ENCODE measurements at regions of chr19 and their contacts with region 1.

Region 1: DNA sequence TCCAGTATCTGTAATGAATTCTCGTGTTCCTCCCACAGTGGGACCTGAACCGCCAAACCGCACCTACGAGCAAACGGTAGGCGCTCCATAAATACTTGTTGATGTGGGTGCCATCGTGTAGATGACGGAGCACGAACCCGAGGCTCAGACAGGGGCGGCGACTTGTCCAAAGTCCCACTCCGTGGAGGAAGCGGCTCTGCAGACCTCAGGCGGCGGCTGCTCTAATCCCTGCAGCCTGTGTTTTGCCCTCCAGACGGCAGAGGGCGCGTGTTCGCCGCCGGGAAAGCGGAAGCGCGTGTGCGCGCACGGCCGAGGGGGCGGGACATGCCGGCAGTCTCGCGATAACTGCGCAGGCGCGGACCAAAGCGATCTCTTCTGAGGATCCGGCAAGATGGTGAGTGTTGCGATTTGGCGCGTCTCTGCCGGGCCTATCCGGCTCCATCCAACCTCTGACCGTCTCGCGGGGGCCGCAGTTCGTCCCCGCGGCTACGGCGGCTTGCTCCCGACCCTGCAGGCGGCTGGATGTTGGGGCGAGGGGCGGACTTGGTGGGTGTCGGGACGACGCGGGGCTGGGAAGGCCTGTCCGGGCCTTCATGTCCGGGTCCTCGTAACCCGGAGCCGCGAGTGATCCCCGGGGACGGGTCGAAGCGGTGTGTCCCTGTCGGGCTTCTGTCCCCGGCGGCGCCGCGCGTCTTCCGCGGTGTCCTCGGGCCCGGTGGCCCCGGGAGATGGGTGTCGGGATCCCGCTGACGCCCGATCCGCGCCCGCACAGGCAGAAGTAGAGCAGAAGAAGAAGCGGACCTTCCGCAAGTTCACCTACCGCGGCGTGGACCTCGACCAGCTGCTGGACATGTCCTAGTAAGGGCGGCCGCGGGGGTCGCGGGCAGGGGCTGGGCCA is at the start of gene RPS15:
- DNase-seq: peak; percentile 91 to 99 (median 94)

Region 2: GRCh38 chr19:1275260-1275975 is 162.9 kb before region 1 on chr19 and contains the start of gene FAM174C:
- intact Hi-C with region 1: loop called (anchors 10 kb)
- DNase-seq: peak; percentile 89 to 99 (median 96)

Region 3: DNA sequence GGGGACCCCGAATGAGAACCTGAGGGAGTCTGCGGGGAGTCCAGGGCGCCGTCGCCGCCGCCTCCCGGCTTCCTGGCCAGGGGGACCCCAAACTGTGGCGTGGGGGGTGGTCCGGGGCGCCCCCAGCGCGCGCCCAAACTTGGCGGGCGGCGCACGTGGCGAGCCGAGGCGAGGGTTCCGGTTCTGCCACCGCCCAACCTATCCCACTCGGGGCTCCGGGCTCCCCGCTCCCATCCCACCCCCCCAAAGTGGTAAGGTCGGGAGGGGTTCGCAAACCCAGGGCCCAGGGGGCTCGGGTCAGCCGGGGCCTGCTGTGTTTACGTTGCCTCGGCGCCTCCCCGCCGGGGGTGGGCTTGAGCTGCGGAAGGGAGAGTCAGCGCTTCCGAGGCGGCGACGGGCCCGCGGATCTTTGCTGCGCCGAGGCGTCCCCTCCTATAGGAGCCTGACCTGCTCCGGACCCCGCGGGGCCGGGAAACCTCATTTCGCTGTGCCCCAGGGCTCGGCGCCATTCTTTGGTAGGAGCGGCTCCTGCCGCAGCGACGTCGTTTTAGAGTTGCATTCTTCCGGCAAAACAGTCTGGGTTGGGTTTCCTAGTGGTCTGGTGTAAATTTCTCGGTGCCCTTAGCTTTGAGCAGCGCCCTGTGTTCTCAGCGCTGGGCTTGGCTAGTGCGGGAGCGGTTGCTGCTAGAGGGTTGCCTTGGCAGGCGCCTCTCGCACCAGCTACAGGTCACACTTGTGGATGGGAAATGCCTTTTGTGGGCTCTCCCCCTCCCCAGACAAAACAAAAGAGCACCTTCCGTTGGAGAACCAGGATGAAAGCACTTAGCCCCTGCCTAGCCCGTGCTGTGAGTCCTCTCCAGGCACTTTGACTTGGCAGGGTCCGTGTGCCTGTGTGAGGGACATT is 29.7 kb before region 1 on chr19:
- intact Hi-C with region 1: loop called (anchors 2 kb)
- DNase-seq: peak in 2 of 10 donors; percentile 83 to 89